ENCODE measurements at regions of chr1 and their contacts with region 1.

Region 1: GRCh38 chr1:10950316-10951172 is 61.9 kb upstream of the TARDBP start:
- DNase-seq: peak; percentile 56
- H3K4me3 ChIP-seq: no peak overlapping the region
- H3K27ac ChIP-seq: peak overlapping the region in 1 of 2 experiments; percentile 48; a peak in 1 of 4 replicates
- H3K4me1 ChIP-seq: peaks cover 0 to 33% of the 10 kb centered on the region in 2 experiments; a peak in 2 of 4 replicates
- H3K27me3 ChIP-seq: 0 out of 2 replicates have a peak, but pooled peaks cover 3% of the 10 kb centered on the region
- CTCF ChIP-seq: no peak
- EP300 ChIP-seq: no peak
- RAD21 ChIP-seq: no peak

Region 2: DNA sequence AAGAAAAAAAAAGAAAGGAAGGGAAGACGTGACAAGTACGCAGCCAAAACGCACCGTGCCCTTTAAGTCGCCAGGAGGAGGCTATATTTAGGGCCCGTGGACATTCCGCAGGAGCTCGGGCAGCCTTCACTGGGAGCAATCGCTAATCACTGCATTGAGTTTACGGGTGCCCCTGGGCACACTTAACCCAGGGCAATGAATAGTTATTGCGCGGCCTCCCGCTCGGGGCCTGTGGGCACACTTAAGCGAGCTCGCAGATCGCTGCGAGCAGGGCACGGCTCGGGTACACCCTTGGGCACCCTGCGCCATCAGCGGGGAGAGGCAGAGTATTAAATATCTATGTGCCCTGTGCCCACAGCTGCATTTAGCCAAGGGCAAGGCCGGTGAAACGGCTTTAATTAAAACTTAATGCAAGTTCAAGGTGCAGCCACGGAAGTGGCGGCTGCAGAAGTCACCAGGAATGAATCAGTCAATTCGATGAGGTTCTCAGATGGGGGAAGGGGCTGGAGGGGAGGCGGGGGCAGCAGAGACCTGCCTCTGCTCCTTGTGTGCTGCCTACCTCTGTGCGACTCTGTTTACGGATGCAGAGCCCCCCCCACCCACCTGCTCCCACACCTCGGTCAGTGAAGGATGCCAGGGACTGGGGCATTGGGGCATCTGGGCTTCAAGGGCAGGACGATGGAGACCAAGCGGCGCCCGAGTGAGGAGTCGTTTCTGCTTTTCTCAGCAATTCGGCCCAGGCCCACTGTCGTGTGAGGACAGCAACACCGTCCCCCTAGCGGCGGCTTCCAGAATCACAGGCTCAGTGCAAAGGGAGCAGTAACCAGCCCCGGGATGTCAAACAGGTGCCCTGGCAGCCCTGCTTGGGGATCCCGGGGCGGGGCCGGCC is 10.1 kb after region 1 on chr1:
- CTCF ChIA-PET with region 1: interaction called, 30 read pairs
- POLR2A ChIA-PET with region 1: interaction called, 3 read pairs
- DNase-seq: peak; percentile 90
- H3K4me3 ChIP-seq: peak overlapping the region in 1 of 2 experiments; percentile 26; a peak in 1 of 4 replicates
- H3K27ac ChIP-seq: peak overlapping the region in 1 of 2 experiments; percentile 31; a peak in 1 of 4 replicates
- H3K4me1 ChIP-seq: peaks cover 0 to 14% of the 10 kb centered on the region in 2 experiments; a peak in 1 of 4 replicates
- H3K27me3 ChIP-seq: 0 out of 2 replicates have a peak, but pooled peaks cover 8% of the 10 kb centered on the region
- CTCF ChIP-seq: peak; percentile 77
- EP300 ChIP-seq: no peak
- RAD21 ChIP-seq: peak; percentile 74